Dendritic cell treated with granulocyte-macrophage colony-stimulating factor and Interleukin-4, amounts not matched to agents 40 ng/mL and 50 ng/mL, for 4 days (primary cell): ENCODE measurements at regions of chr18 and their contacts with region 1.

Region 1: DNA sequence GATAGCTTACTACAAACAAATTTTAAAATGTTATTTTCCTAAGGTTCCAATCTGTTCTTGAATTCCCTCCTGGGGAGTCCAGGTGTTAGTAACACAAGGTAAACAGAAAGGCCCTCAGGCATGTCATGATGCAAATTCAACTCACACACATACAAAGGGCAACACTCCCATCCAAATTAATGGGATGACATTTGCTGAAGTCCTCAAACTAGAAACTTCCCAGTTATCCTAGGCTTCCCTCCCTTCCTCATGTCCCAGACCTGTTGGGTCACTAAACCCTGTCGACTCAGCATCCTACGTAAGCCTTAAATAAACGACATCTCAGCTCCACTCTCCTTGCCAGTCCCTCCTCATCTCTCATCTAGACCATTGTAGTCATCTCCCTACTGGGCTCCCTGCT is 85.1 kb downstream of the GREB1L start:
- H3K4me3 Mint-ChIP-seq: no peak overlapping the region
- H3K27ac Mint-ChIP-seq: no peak overlapping the region
- H3K4me1 Mint-ChIP-seq: no peaks in the 10 kb centered on the region
- H3K27me3 Mint-ChIP-seq: no peaks in the 10 kb centered on the region

Region 2: DNA sequence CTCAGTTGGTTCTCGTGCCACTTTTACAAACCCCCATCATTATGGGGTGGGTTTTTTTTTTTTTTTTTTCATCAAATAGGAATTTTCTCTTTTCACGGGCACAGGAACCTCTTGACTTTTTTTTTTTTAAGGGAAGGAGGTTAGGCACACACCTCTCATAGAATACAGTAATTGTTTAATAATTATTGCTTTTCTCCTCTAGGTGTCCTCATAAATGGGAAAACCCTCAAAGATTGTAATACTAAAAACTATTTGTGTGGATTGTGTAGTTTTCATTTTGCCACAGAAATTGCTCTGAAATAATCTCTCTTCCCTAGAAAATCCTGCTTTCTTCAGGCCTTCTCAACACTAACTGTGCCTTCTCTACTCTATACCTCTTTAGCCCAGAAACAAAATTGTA is 62.2 kb after region 1 on chr18:
- intact Hi-C with region 1: loop called (anchors 10 kb)
- H3K4me3 Mint-ChIP-seq: no peak overlapping the region
- H3K27ac Mint-ChIP-seq: no peak overlapping the region
- H3K4me1 Mint-ChIP-seq: no peaks in the 10 kb centered on the region
- H3K27me3 Mint-ChIP-seq: no peaks in the 10 kb centered on the region